AG04450 (cell line): ENCODE measurements at regions of chr6 and their contacts with region 1.

Region 1: DNA sequence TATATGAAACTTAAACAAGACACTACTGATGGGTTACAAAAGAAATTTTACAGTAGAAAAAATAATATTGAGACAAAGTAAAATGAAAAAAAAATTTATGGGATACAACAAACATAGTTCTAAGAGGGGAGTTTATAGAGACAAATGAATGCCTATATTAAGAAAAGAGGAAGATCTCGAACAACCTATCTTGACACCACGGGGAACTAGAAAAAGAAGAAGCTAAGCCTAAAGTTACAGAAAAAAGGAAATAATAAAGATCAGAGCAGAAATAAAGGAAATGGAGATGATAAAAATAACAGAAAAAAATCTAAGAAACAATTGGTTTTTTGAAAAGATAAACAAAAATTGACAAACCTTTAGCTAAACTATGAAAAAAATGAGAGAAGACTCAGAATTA is 9.1 kb upstream of the ECHDC1 start:
- DNase-seq: no peak
- H3K4me3 ChIP-seq: no peak overlapping the region
- H3K27ac ChIP-seq: no peak overlapping the region
- H3K27me3 ChIP-seq: no peaks in the 10 kb centered on the region
- CTCF ChIP-seq: no peak

Region 2: DNA sequence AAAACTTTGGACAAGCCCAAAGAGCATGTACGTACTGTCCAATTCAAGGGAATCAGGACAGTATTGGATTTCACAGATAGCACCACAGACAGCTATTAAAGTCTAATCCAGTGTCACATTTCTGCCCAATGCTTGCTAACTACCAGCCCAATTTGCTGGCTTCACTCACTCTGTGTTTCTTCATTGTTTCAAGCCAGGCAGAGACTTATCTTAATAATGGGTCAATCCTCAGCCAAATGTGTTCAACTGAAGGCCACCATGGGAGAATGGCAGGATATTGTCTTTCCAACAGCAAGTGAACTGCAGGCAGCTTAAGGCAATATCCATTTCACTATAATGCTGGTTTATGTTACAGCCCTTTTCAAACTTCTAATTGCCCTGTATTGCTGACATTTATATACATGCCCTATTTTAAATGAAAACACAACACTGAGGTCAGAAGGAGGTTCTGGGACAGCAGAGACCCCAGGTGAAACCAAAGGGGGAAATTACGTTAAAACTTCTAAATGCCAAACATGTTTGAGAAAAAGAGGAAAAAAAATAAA is 376.2 kb before region 1 on chr6:
- CTCF ChIA-PET with region 1: no interaction called
- POLR2A ChIA-PET with region 1: no interaction called
- DNase-seq: no peak
- H3K4me3 ChIP-seq: no peak overlapping the region
- H3K27ac ChIP-seq: no peak overlapping the region
- H3K27me3 ChIP-seq: no peaks in the 10 kb centered on the region
- CTCF ChIP-seq: no peak

Region 3: GRCh38 chr6:127391094-127391953 is 38.8 kb after region 1 on chr6:
- CTCF ChIA-PET with region 1: no interaction called
- POLR2A ChIA-PET with region 1: interaction called, 13 read pairs
- DNase-seq: no peak
- H3K4me3 ChIP-seq: no peak overlapping the region
- H3K27ac ChIP-seq: no peak overlapping the region
- H3K27me3 ChIP-seq: no peaks in the 10 kb centered on the region
- CTCF ChIP-seq: no peak